Endothelial cell of umbilical vein (primary cell): ENCODE measurements at regions of chr17 and their contacts with region 1.

Region 1: DNA sequence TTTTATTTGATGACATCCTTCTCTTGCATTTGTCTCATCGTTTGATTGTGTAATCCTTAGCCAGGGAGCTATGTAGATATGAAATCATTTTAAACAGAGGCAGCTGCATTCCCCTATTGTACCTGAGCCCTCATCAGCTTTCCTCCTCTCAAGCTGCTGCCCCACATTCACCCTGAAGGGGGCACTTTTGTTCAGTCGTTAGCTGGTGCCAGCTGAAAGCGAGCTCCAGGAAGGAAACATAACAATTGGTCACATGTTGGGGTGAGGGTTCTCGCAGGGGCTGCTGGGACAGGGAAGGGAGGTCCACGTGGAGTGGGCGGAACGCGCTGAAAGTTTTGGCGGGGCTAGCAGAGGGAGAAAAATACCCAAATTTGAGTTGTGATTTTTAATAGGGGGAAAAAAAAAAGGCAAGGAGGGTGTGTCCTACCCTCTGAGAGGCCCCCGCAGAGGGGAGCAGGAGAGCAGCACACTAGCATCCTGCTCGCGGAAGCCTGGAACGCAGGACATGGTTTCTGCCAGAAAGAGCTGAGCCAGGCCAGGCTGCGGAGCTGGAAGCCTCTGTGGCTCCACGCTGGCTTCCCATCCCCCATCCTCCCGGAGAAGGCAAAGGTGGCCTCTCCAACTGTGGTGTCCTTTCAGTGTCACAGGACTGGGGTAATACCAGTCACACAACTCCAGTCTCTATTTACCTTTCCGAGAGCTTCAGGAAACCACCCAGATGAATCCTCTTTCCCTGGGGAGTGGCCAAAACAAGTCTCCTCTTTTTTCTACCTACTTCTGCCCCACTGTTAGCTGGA is 8.5 kb upstream of the MSL1 start:
- DNase-seq: peak; percentile 94
- H3K4me3 ChIP-seq: peak overlapping the region in 2 of 3 experiments; percentile 23 to 43
- H3K27ac ChIP-seq: peak overlapping the region; percentile 76
- H3K4me1 ChIP-seq: peaks cover 52% of the 10 kb centered on the region
- H3K27me3 ChIP-seq: no peaks in the 10 kb centered on the region
- CTCF ChIP-seq: peak; percentile 47 to 86
- POLR2A ChIP-seq: no peak

Region 2: GRCh38 chr17:40015005-40015997 is 98.0 kb before region 1 on chr17 and contains the start of gene CSF3:
- CTCF ChIA-PET with region 1: interaction called, 22 read pairs
- POLR2A ChIA-PET with region 1: no interaction called
- dilution Hi-C with region 1: no loop called
- intact Hi-C with region 1: loop called (anchors 1 kb)
- DNase-seq: peak; percentile 31
- H3K4me3 ChIP-seq: peak within 1 kb of the TSS in 1 of 3 experiments; percentile 5
- H3K27ac ChIP-seq: peak within 1 kb of the TSS; percentile 88
- H3K4me1 ChIP-seq: peaks cover 56% of the 10 kb centered on the region
- H3K27me3 ChIP-seq: no peaks in the 10 kb centered on the region
- CTCF ChIP-seq: no peak
- POLR2A ChIP-seq: no peak
- total RNA-seq, gene CSF3: 2.4 and 2.9 TPM in 2 replicates

Region 3: DNA sequence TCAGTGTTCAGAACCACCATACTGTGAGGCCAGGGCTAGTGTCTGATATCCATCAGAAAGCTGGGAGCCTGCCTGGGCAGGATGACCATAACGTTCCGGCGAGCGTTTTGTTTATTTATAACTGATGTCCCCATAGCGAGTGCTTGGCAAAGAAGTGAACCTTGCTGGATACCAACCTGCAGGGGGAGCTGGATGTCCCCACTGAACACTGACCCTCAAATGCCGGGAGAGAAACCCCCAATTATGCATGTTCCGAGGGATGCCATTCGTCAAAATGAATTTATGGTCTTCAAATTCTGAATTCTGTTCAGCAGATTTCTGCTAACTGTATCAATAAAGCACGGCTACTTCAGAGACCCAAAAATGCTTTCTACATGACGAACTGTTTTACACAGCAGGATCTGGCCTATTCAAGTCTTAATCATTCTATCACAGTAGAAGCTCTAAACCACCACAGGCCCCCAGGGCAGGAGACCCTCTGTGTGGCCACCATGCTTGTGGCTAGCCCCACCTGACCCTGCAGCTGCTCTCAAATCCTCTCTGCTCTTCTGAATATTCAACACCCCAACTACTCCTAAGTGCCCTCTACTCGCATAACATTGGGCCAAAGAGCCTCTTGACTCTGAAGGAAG is 74.3 kb before region 1 on chr17:
- CTCF ChIA-PET with region 1: interaction called, 26 read pairs
- POLR2A ChIA-PET with region 1: no interaction called
- dilution Hi-C with region 1: no loop called
- intact Hi-C with region 1: loop called (anchors 1 kb)
- DNase-seq: peak; percentile 84
- H3K4me3 ChIP-seq: no peak overlapping the region
- H3K27ac ChIP-seq: peak overlapping the region; percentile 27
- H3K4me1 ChIP-seq: peaks cover 5% of the 10 kb centered on the region
- H3K27me3 ChIP-seq: no peaks in the 10 kb centered on the region
- CTCF ChIP-seq: peak; percentile 74 to 85
- POLR2A ChIP-seq: peak; percentile 28

Region 4: DNA sequence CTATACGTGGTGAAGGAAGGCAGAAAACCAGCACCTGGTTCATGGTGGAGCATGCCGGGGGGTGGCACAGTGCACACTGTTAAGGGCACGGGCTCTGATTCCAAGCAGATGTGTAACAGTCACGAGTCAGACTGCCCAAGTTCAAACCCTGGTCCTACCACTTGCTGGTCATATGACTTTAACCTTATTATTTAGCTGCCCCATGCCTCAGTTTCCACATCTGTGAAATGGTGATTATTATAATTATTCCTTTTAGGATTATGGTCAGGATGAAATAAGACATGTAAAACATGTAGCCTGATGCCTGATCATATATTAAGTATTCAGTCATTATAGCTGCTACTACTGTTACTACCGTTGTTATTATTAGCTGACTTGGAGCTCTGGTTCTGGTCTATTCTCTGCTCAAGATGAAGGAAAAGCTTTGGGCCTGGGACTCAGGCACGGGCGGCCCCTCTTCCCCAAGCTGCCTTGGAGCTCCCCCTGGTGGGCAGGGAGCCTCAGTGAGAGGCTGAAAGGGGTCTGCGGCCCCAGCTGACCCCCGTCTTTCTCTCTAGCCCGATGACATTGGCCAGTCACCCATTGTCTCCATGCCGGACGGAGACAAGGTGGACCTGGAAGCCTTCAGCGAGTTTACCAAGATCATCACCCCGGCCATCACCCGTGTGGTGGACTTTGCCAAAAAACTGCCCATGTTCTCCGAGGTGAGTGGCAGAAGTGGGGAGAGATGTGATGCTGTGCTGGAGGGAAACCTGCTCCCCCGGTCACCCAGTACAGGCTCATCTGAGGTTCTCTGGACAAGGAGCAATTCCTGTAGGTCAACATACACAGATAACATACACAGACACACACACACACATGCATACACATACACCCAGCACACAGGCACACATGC is 26.9 kb before region 1 on chr17:
- CTCF ChIA-PET with region 1: interaction called, 43 read pairs
- POLR2A ChIA-PET with region 1: interaction called, 3 read pairs
- dilution Hi-C with region 1: no loop called
- intact Hi-C with region 1: loop called (anchors 1 kb)
- DNase-seq: peak; percentile 40
- H3K4me3 ChIP-seq: no peak overlapping the region
- H3K27ac ChIP-seq: no peak overlapping the region
- H3K4me1 ChIP-seq: no peaks in the 10 kb centered on the region
- H3K27me3 ChIP-seq: no peaks in the 10 kb centered on the region
- CTCF ChIP-seq: peak; percentile 80 to 89
- POLR2A ChIP-seq: no peak

Region 5: GRCh38 chr17:40134184-40134583 is 20.9 kb after region 1 on chr17:
- CTCF ChIA-PET with region 1: interaction called, 21 read pairs
- POLR2A ChIA-PET with region 1: interaction called, 3 read pairs
- dilution Hi-C with region 1: no loop called
- intact Hi-C with region 1: no loop called
- DNase-seq: peak; percentile 47
- H3K4me3 ChIP-seq: peak overlapping the region in 1 of 3 experiments; percentile 2
- H3K27ac ChIP-seq: peak overlapping the region; percentile 29
- H3K4me1 ChIP-seq: peaks cover 17% of the 10 kb centered on the region
- H3K27me3 ChIP-seq: no peaks in the 10 kb centered on the region
- CTCF ChIP-seq: no peak
- POLR2A ChIP-seq: no peak

Region 6: GRCh38 chr17:40191237-40192208 is 78.2 kb after region 1 on chr17:
- CTCF ChIA-PET with region 1: interaction called, 41 read pairs
- POLR2A ChIA-PET with region 1: no interaction called
- dilution Hi-C with region 1: no loop called
- intact Hi-C with region 1: loop called (anchors 1 kb)
- DNase-seq: peak; percentile 88
- H3K4me3 ChIP-seq: peak overlapping the region; percentile 20 to 55 (median 40)
- H3K27ac ChIP-seq: no peak overlapping the region
- H3K4me1 ChIP-seq: peaks cover 4% of the 10 kb centered on the region
- H3K27me3 ChIP-seq: no peaks in the 10 kb centered on the region
- CTCF ChIP-seq: peak; percentile 73 to 90
- POLR2A ChIP-seq: no peak